GM23248 (cell line): ENCODE measurements at regions of chr3 and their contacts with region 1.

Region 1: DNA sequence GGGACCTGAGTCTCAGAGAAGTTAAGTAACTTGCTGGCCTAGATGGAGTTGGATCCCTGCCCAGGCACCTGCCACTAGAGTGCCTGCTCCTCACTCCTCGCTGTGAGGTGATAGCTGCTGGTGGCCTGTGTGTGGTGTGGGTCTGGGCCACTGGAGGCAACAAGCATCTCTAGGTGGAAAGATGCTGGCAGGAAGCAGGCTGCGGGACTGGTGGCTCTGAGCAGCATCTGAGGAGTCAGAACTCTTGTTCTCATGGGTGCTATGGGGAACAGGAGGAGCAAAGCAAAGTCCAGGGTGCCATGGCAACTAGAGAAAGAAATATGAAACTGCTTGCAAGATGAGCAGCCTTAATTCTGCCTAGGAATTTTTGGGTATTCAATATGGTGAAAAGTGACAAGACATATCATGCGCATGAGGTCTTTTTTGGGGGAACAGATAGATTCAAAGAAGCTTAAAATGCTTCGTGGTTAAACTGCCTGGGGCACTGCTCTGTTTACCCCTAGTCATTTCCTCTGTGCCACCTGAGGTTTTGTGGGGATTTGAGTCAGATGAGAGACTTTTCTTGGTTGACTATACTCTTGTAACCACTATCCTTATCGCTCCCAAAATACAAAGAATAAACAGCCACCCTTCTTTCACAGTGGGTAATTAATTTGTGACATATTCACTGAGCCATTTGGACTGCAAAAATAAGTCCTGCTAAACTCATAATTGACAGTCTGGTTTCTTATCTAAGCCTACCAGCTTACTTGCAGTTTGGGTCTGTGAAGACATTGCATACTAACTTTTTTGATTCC is 50.3 kb downstream of the MED12L start:
- DNase-seq: no peak
- H3K4me3 ChIP-seq: no peak overlapping the region
- H3K27ac ChIP-seq: no peak overlapping the region
- H3K4me1 ChIP-seq: no peaks in the 10 kb centered on the region
- H3K27me3 ChIP-seq: no peaks in the 10 kb centered on the region

Region 2: GRCh38 chr3:151011427-151011826 is 124.3 kb before region 1 on chr3:
- in situ Hi-C with region 1: loop called (anchors 10 kb)
- DNase-seq: peak; percentile 72
- H3K4me3 ChIP-seq: no peak overlapping the region
- H3K27ac ChIP-seq: no peak overlapping the region
- H3K4me1 ChIP-seq: peaks cover 17% of the 10 kb centered on the region
- H3K27me3 ChIP-seq: no peaks in the 10 kb centered on the region

Region 3: GRCh38 chr3:151315136-151315535 is 179.4 kb after region 1 on chr3:
- in situ Hi-C with region 1: no loop called
- DNase-seq: peak; percentile 34
- H3K4me3 ChIP-seq: no peak overlapping the region
- H3K27ac ChIP-seq: no peak overlapping the region
- H3K4me1 ChIP-seq: peaks cover 38% of the 10 kb centered on the region
- H3K27me3 ChIP-seq: no peaks in the 10 kb centered on the region